T-cell (primary cell): ENCODE measurements at regions of chr4 and their contacts with region 1.

Region 1: DNA sequence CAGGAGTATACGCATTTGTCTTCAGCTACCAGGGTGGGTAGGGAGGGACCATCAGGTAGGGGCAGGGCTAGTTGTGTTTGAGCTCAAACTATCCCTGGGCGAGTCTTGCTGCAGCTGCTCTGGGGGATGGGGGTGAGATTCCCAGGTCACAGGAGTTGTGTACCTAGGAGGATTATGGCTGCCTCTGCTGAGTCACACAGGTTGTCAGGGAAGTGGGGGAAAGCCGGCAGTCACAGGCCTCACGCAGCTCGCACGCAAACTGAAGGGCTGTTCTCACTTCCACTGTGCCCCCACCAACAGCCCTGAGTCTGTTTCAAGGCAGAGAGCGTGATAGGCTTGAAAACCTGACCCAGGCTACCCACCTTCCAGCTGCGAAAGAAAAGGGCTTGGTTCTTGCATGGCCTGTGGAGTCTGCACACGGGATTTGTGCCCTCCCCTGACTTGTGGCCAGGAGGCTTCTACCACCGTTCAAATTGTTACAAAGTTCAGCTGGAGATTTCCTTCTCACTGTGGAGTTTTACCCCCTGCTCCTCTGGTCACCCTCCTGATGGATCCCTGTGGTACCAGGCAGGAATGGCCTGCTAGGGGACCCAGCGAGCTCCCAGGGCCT is 63.8 kb downstream of the ARFIP1 start:
- DNase-seq: no peak
- ATAC-seq: no peak
- H3K4me3 ChIP-seq: no peak overlapping the region
- H3K4me3 Mint-ChIP-seq: no peak overlapping the region
- H3K27ac ChIP-seq: no peak overlapping the region
- H3K27ac Mint-ChIP-seq: no peak overlapping the region
- H3K4me1 ChIP-seq: no peaks in the 10 kb centered on the region
- H3K4me1 Mint-ChIP-seq: peaks cover 19 to 23% (median 21%) of the 10 kb centered on the region in 3 donors
- H3K27me3 ChIP-seq: no peaks in the 10 kb centered on the region
- H3K27me3 Mint-ChIP-seq: no peaks in the 10 kb centered on the region

Region 2: GRCh38 chr4:151567056-151567455 is 1276.5 kb before region 1 on chr4:
- CTCF ChIA-PET with region 1: no interaction called
- POLR2A ChIA-PET with region 1: no interaction called
- DNase-seq: no peak
- ATAC-seq: no peak
- H3K4me3 ChIP-seq: no peak overlapping the region
- H3K4me3 Mint-ChIP-seq: no peak overlapping the region
- H3K27ac ChIP-seq: no peak overlapping the region
- H3K27ac Mint-ChIP-seq: no peak overlapping the region
- H3K4me1 ChIP-seq: peaks cover 0 to 2% of the 10 kb centered on the region in 2 experiments
- H3K4me1 Mint-ChIP-seq: peaks cover 6 to 15% (median 7%) of the 10 kb centered on the region in 3 donors
- H3K27me3 ChIP-seq: peaks cover 2 to 4% of the 10 kb centered on the region in 2 experiments
- H3K27me3 Mint-ChIP-seq: peaks cover 18 to 29% of the 10 kb centered on the region in 2 donors

Region 3: DNA sequence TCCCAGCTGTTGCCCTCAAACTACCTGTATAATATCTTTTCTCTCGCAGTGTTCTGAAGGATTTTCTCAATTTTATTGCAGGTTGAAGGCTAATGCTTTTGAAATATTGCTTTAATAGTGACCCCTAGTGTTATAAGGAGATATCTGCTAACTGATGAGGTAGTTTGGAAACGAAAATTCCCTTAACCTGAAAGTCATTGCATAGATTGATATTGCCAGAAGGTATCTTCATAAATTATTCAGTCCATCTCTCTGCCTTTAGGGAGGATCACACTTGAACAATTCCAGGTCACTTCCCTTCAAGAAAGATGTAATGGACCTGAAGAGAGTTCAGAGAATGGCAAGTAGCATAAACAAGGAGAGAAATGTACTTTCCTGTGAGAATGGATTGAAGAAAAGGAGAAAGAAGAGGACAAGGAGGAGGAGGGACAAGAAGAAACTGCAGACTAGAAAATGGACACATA is 108.2 kb before region 1 on chr4:
- CTCF ChIA-PET with region 1: interaction called in 1 of 2 experiments, 11 read pairs
- POLR2A ChIA-PET with region 1: no interaction called
- DNase-seq: peak in 1 of 35 experiments; percentile 45
- ATAC-seq: no peak
- H3K4me3 ChIP-seq: no peak overlapping the region
- H3K4me3 Mint-ChIP-seq: no peak overlapping the region
- H3K27ac ChIP-seq: no peak overlapping the region
- H3K27ac Mint-ChIP-seq: no peak overlapping the region
- H3K4me1 ChIP-seq: no peaks in the 10 kb centered on the region
- H3K4me1 Mint-ChIP-seq: peaks cover 2 to 4% (median 3%) of the 10 kb centered on the region in 3 donors
- H3K27me3 ChIP-seq: no peaks in the 10 kb centered on the region
- H3K27me3 Mint-ChIP-seq: peaks cover 3% of the 10 kb centered on the region in 2 donors

Region 4: DNA sequence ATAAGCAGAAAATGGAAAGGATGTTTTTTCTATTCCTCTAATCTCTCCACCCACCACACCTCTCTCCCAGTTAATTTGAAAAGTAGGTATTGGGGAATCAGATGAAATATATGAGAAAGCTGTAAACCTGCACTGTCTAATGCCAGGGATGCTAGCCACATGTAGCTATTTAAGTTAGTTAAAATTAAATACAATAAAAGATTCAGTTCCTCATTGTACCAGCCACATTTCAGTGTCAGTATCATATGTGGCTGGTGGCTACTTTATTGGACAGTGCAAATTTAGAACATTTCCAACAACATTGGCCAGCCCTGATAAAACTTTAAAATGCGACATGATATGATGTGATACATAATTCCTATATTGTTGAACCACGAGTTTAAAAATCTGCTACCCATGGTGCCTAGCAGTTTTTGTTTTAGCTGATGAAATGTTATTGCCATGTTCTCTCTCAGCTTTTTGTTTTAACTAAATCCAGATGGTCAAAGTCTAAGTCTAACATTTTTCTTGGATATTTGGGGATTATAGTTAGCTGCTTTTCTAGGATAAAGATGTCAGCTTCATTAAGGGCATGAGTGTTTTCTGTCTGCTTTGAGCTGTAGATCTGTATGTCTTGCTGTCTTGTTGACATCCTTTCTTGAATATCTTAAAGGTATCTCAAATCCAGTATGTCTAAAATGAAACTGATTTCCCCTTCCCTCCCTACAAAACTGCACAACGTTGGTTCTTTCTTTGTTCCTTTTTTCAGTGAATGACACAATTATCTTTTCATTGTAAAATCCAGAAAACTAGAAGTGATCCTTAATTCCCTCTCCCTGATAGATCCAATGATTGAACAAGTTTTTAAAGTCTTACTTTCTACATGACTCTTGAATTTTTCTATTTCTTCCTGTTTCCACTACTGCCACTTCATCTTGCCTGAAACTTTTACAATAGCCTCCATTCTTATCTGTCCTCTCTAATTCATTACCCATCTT is 57.7 kb before region 1 on chr4:
- CTCF ChIA-PET with region 1: no interaction called
- POLR2A ChIA-PET with region 1: no interaction called
- DNase-seq: no peak
- ATAC-seq: peak in 3 of 4 experiments; percentile 30 to 45 (median 37)
- H3K4me3 ChIP-seq: no peak overlapping the region
- H3K4me3 Mint-ChIP-seq: peak overlapping the region; percentile 41 to 51 (median 44)
- H3K27ac ChIP-seq: peak overlapping the region; percentile 32
- H3K27ac Mint-ChIP-seq: peak overlapping the region; percentile 79 to 83
- H3K4me1 ChIP-seq: peaks cover 4 to 10% of the 10 kb centered on the region in 2 experiments
- H3K4me1 Mint-ChIP-seq: peaks cover 33 to 55% (median 39%) of the 10 kb centered on the region in 3 donors
- H3K27me3 ChIP-seq: no peaks in the 10 kb centered on the region
- H3K27me3 Mint-ChIP-seq: no peaks in the 10 kb centered on the region